Caco-2 (cell line): ENCODE measurements at regions of chr7 and their contacts with region 1.

Region 1: GRCh38 chr7:4849369-4849768 is 12.5 kb downstream of the PAPOLB start:
- DNase-seq: peak; percentile 61 to 71
- H3K4me3 ChIP-seq: no peak overlapping the region
- H3K4me3 Mint-ChIP-seq: no peak overlapping the region
- H3K27ac Mint-ChIP-seq: no peak overlapping the region
- H3K4me1 ChIP-seq: no peaks in the 10 kb centered on the region
- H3K4me1 Mint-ChIP-seq: no peaks in the 10 kb centered on the region
- H3K27me3 ChIP-seq: no peaks in the 10 kb centered on the region
- H3K27me3 Mint-ChIP-seq: peaks cover 10% of the 10 kb centered on the region
- CTCF ChIP-seq: peak; percentile 46 to 47

Region 2: GRCh38 chr7:4486907-4487306 is 362.5 kb before region 1 on chr7:
- CTCF ChIA-PET with region 1: no interaction called
- POLR2A ChIA-PET with region 1: no interaction called
- intact Hi-C with region 1: no loop called
- DNase-seq: no peak
- H3K4me3 ChIP-seq: no peak overlapping the region
- H3K4me3 Mint-ChIP-seq: no peak overlapping the region
- H3K27ac Mint-ChIP-seq: no peak overlapping the region
- H3K4me1 ChIP-seq: no peaks in the 10 kb centered on the region
- H3K4me1 Mint-ChIP-seq: no peaks in the 10 kb centered on the region
- H3K27me3 ChIP-seq: no peaks in the 10 kb centered on the region
- H3K27me3 Mint-ChIP-seq: no peaks in the 10 kb centered on the region
- CTCF ChIP-seq: no peak

Region 3: DNA sequence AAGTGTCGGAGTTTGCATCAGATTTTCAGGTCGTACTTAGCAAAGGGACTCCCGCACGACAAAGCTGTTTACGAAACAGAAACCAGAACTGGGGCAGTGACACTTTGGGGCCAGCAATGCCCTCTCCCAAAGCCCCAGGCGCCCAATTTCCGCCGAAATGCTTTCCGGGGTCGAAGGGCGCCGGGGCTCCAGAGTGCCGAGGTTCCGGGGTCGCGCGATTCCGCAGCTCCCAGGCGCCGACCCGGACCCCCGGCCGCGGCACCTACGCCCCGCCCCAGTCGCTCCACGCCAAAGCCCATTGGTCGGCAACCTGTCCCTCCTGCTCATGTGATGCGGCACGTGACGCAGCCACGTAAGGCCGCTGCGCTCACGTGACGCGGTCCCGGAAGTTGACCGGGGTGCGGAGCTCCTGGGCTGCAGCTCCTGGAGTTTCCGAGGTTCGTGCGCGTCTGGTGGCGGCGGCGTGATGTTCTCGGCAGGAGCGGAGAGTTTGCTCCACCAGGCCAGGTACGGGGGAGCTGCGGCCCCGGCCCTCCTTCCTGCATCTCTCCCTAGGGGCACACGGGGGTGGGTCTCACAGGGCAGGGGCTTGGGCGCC is 74.0 kb before region 1 on chr7 and contains the start of gene AP5Z1:
- CTCF ChIA-PET with region 1: no interaction called
- POLR2A ChIA-PET with region 1: interaction called, 18 read pairs
- intact Hi-C with region 1: no loop called
- DNase-seq: peak; percentile 95 to 96
- H3K4me3 ChIP-seq: peak within 1 kb of the TSS; percentile 96
- H3K4me3 Mint-ChIP-seq: peak within 1 kb of the TSS; percentile 93
- H3K27ac Mint-ChIP-seq: peak within 1 kb of the TSS; percentile 97
- H3K4me1 ChIP-seq: 0 out of 2 replicates have a peak, but pooled peaks cover 11% of the 10 kb centered on the region
- H3K4me1 Mint-ChIP-seq: peaks cover 13% of the 10 kb centered on the region
- H3K27me3 ChIP-seq: no peaks in the 10 kb centered on the region
- H3K27me3 Mint-ChIP-seq: no peaks in the 10 kb centered on the region
- CTCF ChIP-seq: peak in 1 of 2 experiments; percentile 6
- total RNA-seq, gene AP5Z1: 64.7 and 66.8 TPM in 2 replicates

Region 4: GRCh38 chr7:4883374-4884144 is 34.2 kb after region 1 on chr7 and contains the start of gene RADIL:
- CTCF ChIA-PET with region 1: no interaction called
- POLR2A ChIA-PET with region 1: no interaction called
- intact Hi-C with region 1: no loop called
- DNase-seq: peak; percentile 67 to 71
- H3K4me3 ChIP-seq: no peak within 1 kb of the TSS
- H3K4me3 Mint-ChIP-seq: peak within 1 kb of the TSS; percentile 13
- H3K27ac Mint-ChIP-seq: no peak within 1 kb of the TSS
- H3K4me1 ChIP-seq: peaks cover 7% of the 10 kb centered on the region; the same call in 1 of the 2 replicates
- H3K4me1 Mint-ChIP-seq: no peaks in the 10 kb centered on the region
- H3K27me3 ChIP-seq: no peaks in the 10 kb centered on the region
- H3K27me3 Mint-ChIP-seq: no peaks in the 10 kb centered on the region
- CTCF ChIP-seq: peak; percentile 23 to 36
- total RNA-seq, gene RADIL: not detected in 2 replicates

Region 5: DNA sequence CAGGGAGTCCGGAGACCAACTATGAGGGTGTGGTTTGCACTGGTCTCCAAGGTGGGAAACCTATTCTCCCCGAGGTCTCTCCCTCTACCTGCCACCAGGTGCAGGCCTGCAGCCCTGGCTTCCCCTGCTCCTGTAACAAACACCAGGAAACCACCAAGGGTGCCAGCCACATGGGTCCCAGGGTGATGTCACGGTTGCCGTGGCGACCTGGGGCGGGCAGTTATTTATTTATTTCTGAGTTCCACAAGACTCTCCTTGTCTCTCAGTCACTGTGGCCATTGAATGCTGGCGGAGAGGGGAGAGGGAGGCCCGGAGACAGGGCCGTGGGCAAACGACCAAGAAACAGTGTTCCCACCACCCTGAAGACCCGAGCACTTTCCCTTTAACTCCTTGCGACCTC is 82.6 kb after region 1 on chr7:
- CTCF ChIA-PET with region 1: no interaction called
- POLR2A ChIA-PET with region 1: no interaction called
- intact Hi-C with region 1: no loop called
- DNase-seq: peak in 1 of 2 experiments; percentile 42
- H3K4me3 ChIP-seq: no peak overlapping the region
- H3K4me3 Mint-ChIP-seq: no peak overlapping the region
- H3K27ac Mint-ChIP-seq: no peak overlapping the region
- H3K4me1 ChIP-seq: no peaks in the 10 kb centered on the region
- H3K4me1 Mint-ChIP-seq: no peaks in the 10 kb centered on the region
- H3K27me3 ChIP-seq: no peaks in the 10 kb centered on the region
- H3K27me3 Mint-ChIP-seq: no peaks in the 10 kb centered on the region
- CTCF ChIP-seq: no peak

Region 6: GRCh38 chr7:4960363-4960762 is 111.0 kb after region 1 on chr7:
- CTCF ChIA-PET with region 1: no interaction called
- POLR2A ChIA-PET with region 1: no interaction called
- intact Hi-C with region 1: loop called (anchors 10 kb)
- DNase-seq: peak in 1 of 2 experiments; percentile 38
- H3K4me3 ChIP-seq: no peak overlapping the region
- H3K4me3 Mint-ChIP-seq: no peak overlapping the region
- H3K27ac Mint-ChIP-seq: no peak overlapping the region
- H3K4me1 ChIP-seq: no peaks in the 10 kb centered on the region
- H3K4me1 Mint-ChIP-seq: no peaks in the 10 kb centered on the region
- H3K27me3 ChIP-seq: no peaks in the 10 kb centered on the region
- H3K27me3 Mint-ChIP-seq: peaks cover 7% of the 10 kb centered on the region
- CTCF ChIP-seq: no peak

Region 7: DNA sequence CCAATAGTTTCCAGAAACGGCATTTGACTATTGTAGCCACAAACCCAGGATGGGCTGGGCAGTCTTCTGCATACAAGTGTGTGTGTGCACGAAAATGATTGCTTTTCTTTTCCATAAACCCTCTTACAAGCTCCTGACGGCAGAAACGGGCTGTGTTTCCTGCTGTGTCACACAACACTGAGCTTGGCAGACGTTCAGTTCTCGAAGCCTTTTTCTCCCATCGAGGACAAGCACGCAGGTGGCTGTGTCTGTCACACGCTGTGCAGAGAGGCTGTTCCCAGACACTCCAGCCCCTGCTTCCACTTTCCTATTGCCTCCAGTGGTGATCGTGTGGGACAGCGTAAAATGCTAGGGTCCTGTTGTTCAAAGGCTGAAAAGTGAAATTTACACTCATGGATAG is 228.4 kb after region 1 on chr7:
- CTCF ChIA-PET with region 1: no interaction called
- POLR2A ChIA-PET with region 1: no interaction called
- intact Hi-C with region 1: no loop called
- DNase-seq: no peak
- H3K4me3 ChIP-seq: no peak overlapping the region
- H3K4me3 Mint-ChIP-seq: no peak overlapping the region
- H3K27ac Mint-ChIP-seq: no peak overlapping the region
- H3K4me1 ChIP-seq: no peaks in the 10 kb centered on the region
- H3K4me1 Mint-ChIP-seq: no peaks in the 10 kb centered on the region
- H3K27me3 ChIP-seq: no peaks in the 10 kb centered on the region
- H3K27me3 Mint-ChIP-seq: peaks cover 9% of the 10 kb centered on the region
- CTCF ChIP-seq: no peak